ENCODE measurements at regions of chr12 and their contacts with region 1.

Region 1: GRCh38 chr12:25958428-25959070 is at the start of gene RASSF8:
- DNase-seq: peak; percentile 94
- H3K4me3 ChIP-seq: peak within 1 kb of the TSS; percentile 89 to 92
- H3K27ac ChIP-seq: peak within 1 kb of the TSS; percentile 95 to 99
- H3K4me1 ChIP-seq: peaks cover 0 to 24% of the 10 kb centered on the region in 2 experiments; a peak in 2 of 4 replicates
- H3K27me3 ChIP-seq: no peaks in the 10 kb centered on the region
- CTCF ChIP-seq: no peak
- EP300 ChIP-seq: no peak
- RAD21 ChIP-seq: 0 out of 2 replicates have a peak, but pooled peaks have one; percentile 16
- polyA plus RNA-seq, gene RASSF8: 15.3 and 17.9 TPM in 2 replicates

Region 2: DNA sequence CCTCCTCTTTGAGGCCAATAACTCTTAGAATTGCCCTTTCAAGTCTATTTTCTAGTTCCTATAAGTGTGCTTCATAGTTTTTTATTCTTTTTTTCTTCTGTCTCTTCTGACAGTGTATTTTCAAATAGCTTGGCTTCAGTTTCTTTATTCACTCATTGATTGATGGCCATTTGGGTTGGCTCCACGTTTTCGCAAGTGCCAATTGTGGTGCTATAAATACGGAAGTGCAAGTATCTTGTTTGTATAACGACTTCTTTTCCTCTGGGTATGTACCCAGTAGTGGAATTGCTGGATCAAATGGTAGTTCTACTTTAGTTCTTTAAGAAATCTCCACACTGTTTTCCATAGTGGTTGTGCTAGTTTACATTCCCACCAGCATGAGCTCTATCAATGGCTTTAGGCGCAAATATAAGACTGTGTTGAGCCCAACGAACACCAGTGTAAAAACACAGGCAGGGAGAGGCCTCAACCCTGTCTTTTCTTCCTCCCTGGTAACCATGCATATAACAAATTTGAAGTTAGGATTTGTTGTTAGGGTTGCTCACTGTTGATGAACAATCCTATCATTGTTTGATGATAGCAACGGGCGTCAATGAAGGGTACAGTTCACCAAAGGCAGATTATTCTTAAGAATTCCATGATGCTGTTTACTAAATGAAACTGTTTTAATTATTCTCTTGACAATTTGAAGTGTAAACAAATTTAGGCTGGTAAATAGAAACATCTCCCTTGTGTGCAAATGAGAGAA is 392.2 kb before region 1 on chr12:
- CTCF ChIA-PET with region 1: no interaction called
- POLR2A ChIA-PET with region 1: no interaction called
- DNase-seq: no peak
- H3K4me3 ChIP-seq: no peak overlapping the region
- H3K27ac ChIP-seq: no peak overlapping the region
- H3K4me1 ChIP-seq: no peaks in the 10 kb centered on the region
- H3K27me3 ChIP-seq: no peaks in the 10 kb centered on the region
- CTCF ChIP-seq: no peak
- EP300 ChIP-seq: no peak
- RAD21 ChIP-seq: no peak

Region 3: GRCh38 chr12:25864306-25865276 is 94.0 kb before region 1 on chr12:
- CTCF ChIA-PET with region 1: no interaction called
- POLR2A ChIA-PET with region 1: no interaction called
- DNase-seq: no peak
- H3K4me3 ChIP-seq: no peak overlapping the region
- H3K27ac ChIP-seq: no peak overlapping the region
- H3K4me1 ChIP-seq: peaks cover 0 to 5% of the 10 kb centered on the region in 2 experiments; a peak in 2 of 4 replicates
- H3K27me3 ChIP-seq: no peaks in the 10 kb centered on the region
- CTCF ChIP-seq: no peak
- EP300 ChIP-seq: no peak
- RAD21 ChIP-seq: no peak

Region 4: GRCh38 chr12:25970916-25971653 is 12.5 kb after region 1 on chr12:
- CTCF ChIA-PET with region 1: interaction called, 11 read pairs
- POLR2A ChIA-PET with region 1: interaction called, 3 read pairs
- DNase-seq: no peak
- H3K4me3 ChIP-seq: peak overlapping the region in 1 of 2 experiments; percentile 4; a peak in 1 of 4 replicates
- H3K27ac ChIP-seq: peak overlapping the region in 1 of 2 experiments; percentile 27; a peak in 3 of 4 replicates
- H3K4me1 ChIP-seq: peaks cover 0 to 25% of the 10 kb centered on the region in 2 experiments; a peak in 2 of 4 replicates
- H3K27me3 ChIP-seq: no peaks in the 10 kb centered on the region
- CTCF ChIP-seq: peak; percentile 46
- EP300 ChIP-seq: no peak
- RAD21 ChIP-seq: no peak

Region 5: DNA sequence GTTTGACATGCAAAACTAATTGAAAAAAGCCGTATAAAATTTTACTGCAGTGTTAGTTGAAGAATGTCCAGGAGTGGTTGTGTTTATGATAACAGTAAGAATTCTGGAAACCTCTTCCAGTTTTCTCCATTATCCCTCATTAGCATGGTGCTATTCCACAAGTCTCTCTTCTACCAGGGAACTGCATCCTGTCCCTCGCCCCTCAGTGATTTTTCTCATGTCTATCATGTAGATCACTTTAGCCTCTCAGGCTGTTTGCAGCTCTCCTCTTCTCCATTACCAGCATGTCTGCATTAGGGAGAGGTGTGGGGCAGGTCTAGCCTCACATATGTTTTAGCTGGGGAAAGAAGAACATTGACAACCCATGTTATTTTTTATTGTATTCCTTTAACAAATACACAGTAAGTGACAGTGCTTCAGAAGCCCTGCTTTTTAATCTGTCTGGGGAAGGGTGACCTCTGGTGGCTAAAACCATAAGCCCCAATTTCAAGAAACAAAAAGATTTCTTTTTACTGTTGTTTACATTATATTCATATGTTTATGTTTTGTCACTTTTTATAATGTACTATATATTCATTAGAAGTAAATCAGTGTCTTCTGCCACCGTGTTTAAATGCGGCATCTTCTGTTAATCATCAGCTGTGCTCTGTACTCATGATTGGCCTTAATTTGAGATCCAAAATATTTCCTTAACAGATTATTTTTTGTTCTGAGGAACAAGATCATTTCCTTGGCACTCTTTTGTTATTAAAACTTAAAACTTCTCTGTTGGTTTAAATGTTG is 70.6 kb after region 1 on chr12:
- CTCF ChIA-PET with region 1: interaction called, 18 read pairs
- POLR2A ChIA-PET with region 1: no interaction called
- DNase-seq: peak; percentile 52
- H3K4me3 ChIP-seq: no peak overlapping the region; a peak in 1 of 4 replicates
- H3K27ac ChIP-seq: peak overlapping the region; percentile 54 to 68
- H3K4me1 ChIP-seq: peaks cover 19 to 23% of the 10 kb centered on the region in 2 experiments; a peak in 3 of 4 replicates
- H3K27me3 ChIP-seq: no peaks in the 10 kb centered on the region
- CTCF ChIP-seq: peak; percentile 94
- EP300 ChIP-seq: no peak
- RAD21 ChIP-seq: peak; percentile 88

Region 6: DNA sequence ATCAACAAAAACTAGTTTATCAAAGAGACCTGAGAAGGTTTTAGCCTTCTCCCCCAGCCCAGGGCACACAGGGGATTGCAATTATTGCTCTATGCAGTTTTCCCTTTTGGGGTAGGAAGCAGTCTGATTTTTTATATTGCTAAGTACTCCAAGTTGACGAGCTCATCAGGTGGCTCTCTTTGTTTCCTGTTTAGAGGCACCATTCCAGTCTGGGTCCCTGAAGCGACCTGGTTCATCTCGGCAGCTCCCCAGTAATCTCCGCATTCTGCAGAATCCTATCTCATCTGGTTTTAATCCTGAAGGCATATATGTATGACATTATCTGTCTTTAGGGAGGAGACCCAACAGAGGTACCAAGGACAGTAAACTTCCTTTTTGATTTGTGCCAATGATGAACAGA is 110.0 kb after region 1 on chr12:
- CTCF ChIA-PET with region 1: no interaction called
- POLR2A ChIA-PET with region 1: no interaction called
- DNase-seq: no peak
- H3K4me3 ChIP-seq: no peak overlapping the region
- H3K27ac ChIP-seq: no peak overlapping the region; a peak in 1 of 4 replicates
- H3K4me1 ChIP-seq: no peaks in the 10 kb centered on the region; a peak in 1 of 4 replicates
- H3K27me3 ChIP-seq: no peaks in the 10 kb centered on the region
- CTCF ChIP-seq: no peak
- EP300 ChIP-seq: no peak
- RAD21 ChIP-seq: no peak

Region 7: DNA sequence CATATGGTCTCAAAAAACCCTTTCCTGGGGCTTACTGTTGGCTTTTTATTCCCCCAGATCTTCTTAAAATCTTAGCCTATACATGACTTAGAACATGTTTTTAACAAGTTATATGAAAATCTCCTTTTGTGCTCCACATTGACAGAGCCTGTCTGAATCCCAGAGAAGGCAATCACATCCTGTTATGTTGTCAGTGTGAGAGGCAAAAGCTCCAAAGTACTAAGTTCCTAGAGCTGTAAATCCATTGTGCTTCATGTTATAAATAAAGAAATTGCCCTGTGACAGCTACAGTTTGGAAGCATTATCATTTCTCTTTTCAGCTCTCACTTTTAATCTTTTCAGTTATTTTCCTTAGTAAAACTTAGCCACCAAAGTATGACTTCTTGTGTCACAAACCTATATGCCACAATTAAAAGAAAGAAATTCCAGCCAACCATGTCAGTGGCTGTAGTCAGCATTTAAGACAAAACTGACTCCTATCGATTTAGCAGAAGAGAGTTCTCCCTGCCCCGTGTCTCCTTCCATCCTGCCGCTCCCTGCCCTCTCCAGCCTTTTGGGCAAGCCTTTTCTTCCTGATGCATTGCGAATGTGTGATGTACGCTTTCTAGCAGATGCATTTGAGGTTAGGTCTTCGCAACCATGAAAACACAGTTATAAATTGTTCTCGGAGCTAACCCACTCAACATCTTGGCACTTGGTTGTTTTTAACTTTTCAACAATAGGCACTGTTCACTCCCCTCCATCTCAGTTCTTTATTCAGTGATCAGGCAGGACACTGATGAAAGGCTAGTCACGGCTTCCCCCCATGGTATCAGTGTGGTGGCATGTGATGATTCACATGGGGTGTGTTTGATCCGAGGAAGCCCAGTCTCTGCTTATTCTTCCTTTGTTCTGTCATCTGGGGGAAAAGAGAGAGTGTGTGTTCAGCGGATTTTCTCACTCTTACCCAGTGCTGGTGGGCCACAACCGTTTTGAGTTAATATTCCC is 380.3 kb after region 1 on chr12:
- CTCF ChIA-PET with region 1: no interaction called
- POLR2A ChIA-PET with region 1: no interaction called
- DNase-seq: no peak
- H3K4me3 ChIP-seq: no peak overlapping the region
- H3K27ac ChIP-seq: peak overlapping the region in 1 of 2 experiments; percentile 22; a peak in 1 of 4 replicates
- H3K4me1 ChIP-seq: peaks cover 5 to 11% of the 10 kb centered on the region in 2 experiments; a peak in 3 of 4 replicates
- H3K27me3 ChIP-seq: no peaks in the 10 kb centered on the region
- CTCF ChIP-seq: no peak
- EP300 ChIP-seq: no peak; a peak in 1 of 4 replicates
- RAD21 ChIP-seq: no peak

Measured in SK-N-SH (cell line).